H1 (cell line): ENCODE measurements at regions of chr10 and their contacts with region 1.

Region 1: DNA sequence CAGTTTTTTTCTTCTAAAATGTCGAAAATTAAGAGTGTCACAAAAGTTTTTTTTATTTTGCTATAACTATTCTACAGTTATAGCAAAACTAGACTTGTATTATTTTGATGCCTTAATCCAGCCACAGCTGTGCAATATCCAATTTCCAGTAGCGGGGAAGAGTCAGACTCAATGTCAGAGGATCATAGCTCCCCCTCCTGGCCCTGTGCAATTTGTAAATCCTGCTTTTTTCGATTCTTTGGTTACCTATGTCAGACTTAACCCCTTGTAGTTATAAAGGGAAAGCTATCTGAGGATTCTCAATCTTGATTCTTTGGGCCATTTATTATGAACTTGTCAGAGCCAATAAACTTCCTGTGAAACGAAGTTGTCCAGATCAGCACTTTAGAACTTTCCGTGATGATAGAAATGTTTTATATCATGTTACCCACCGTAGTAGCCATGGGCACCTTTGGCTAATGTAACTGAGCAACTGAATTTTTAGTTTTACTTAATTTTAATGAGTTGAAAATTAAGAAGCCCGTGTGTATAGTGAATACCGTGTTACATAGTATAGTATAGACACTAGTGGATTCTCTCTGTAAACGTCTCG is 87.7 kb upstream of the PRKCQ start:
- DNase-seq: peak in 1 of 2 experiments; percentile 59
- H3K4me3 ChIP-seq: no peak overlapping the region
- H3K27ac ChIP-seq: no peak overlapping the region
- H3K4me1 ChIP-seq: no peaks in the 10 kb centered on the region
- H3K27me3 ChIP-seq: no peaks in the 10 kb centered on the region
- CTCF ChIP-seq: peak in 2 of 3 experiments; percentile 66 to 76; a peak in 3 of 4 replicates
- EP300 ChIP-seq: no peak
- POLR2A ChIP-seq: no peak
- RAD21 ChIP-seq: peak; percentile 86 to 89

Region 2: DNA sequence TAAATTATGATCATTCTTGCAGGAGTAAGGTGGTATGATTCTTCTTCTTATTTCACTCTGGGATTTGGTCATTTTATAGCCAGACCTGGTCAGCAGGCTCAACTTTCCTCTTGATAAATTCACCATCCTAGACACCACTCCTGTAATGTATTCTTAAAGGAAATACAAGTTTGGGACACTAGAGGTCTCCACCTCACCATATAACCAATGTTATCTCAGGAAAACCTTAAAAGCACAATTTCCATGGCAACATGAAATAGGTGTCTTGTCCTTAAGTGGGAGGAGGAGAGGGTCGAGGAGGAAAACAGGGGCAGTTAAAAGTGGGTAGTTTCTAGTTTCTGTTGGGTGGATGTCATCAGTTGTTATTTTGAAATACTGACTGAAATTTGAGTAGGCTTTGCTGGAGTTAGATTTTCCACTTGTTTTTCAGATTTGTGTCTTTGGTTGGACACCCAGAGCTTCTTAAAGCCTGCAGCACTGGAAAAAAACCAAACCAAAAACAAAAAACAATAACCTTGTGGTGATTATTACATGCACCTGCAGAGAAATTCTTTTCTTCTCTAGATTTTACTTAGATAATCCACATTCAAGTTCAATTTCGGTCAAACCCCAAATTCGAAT is 250.8 kb before region 1 on chr10:
- CTCF ChIA-PET with region 1: interaction called, 11 read pairs
- POLR2A ChIA-PET with region 1: no interaction called
- DNase-seq: no peak
- H3K4me3 ChIP-seq: no peak overlapping the region
- H3K27ac ChIP-seq: no peak overlapping the region
- H3K4me1 ChIP-seq: no peaks in the 10 kb centered on the region; a peak in 1 of 7 replicates
- H3K27me3 ChIP-seq: no peaks in the 10 kb centered on the region
- CTCF ChIP-seq: peak in 2 of 3 experiments; percentile 65 to 69; a peak in 2 of 4 replicates
- EP300 ChIP-seq: no peak
- POLR2A ChIP-seq: no peak
- RAD21 ChIP-seq: peak; percentile 87 to 88

Region 3: DNA sequence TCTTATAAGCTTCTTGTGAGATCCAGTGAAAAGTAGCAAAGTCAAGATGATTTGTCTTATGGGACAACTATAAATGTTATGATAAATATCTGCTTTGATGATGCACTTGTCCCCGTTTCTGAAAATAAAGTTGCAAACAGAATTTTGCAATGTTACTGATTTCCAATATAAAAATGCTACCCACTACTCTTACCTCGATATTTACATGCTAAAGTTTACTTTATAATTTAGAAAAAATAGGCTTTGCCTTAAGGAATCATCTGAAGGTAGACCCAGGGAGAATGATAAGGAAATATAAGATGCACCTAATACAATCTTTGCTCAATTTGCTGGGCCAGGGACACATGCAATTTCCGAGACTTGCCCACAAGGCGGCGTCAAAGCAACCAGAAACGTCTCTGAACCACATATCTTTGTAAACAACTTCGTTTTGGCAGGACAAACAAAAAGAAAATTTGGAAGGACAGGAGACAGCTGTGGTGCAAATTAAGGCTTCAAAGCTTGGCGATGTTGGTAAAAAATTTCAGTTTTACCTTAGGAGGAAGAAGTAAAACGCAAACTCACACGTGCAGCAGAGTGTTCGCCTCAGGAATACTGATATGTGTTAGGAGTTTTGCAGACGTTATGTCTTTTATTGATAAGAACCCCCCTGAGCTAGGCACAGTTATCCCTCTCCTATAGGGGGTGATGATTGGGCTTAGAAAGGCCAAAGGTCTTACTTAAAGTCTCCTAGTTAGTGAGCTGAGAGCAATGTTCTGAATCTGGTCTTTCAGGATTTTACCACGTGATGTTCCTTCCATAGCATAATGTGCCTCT is 222.1 kb before region 1 on chr10:
- CTCF ChIA-PET with region 1: interaction called, 31 read pairs
- POLR2A ChIA-PET with region 1: no interaction called
- DNase-seq: no peak
- H3K4me3 ChIP-seq: no peak overlapping the region
- H3K27ac ChIP-seq: no peak overlapping the region
- H3K4me1 ChIP-seq: no peaks in the 10 kb centered on the region
- H3K27me3 ChIP-seq: no peaks in the 10 kb centered on the region
- CTCF ChIP-seq: peak; percentile 58 to 67 (median 66)
- EP300 ChIP-seq: no peak
- POLR2A ChIP-seq: no peak
- RAD21 ChIP-seq: peak; percentile 60 to 65

Region 4: DNA sequence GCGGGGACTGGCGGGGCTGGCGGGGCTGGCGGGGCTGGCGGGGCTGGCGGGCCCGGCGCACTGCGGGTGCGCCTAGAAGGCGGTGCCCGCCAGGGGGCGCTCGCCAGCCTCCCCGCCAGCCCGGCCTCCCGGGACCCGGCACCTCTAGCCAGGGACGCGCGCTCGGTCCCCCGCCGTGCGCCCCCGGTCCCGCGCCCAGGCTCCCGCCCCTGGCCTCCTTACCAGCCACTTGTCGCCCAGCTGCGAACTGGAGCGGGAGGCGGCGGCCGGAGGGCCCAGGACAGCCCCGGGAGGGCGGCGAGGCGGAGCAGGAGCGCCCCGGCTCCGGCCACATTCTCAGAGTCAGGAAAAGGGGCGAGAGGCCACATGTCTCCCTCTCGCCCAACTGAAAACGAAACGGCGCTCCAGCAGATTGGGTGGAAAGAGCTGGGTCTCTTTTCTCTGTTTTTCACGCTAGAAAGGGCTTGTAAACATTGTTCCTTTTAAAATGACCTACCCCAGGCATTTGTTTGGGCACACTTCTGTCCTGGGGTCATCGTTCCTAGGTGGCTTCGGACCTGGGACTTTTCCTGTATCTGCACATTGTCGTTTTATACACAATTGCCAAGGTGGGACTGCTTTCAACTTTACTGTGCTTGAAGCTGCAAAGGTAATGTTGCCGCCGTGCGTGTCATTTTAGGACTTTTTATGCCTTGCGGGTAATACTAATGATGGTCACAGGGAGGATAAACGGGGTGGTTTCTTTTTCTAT is 87.3 kb before region 1 on chr10:
- CTCF ChIA-PET with region 1: interaction called, 23 read pairs
- POLR2A ChIA-PET with region 1: no interaction called
- DNase-seq: peak; percentile 44 to 92
- H3K4me3 ChIP-seq: peak overlapping the region; percentile 54 to 76 (median 72)
- H3K27ac ChIP-seq: peak overlapping the region; percentile 60; the same call in 1 of the 2 replicates
- H3K4me1 ChIP-seq: peaks cover 2 to 9% (median 8%) of the 10 kb centered on the region in 4 experiments; a peak in 6 of 7 replicates
- H3K27me3 ChIP-seq: peaks cover 0 to 5% (median 2%) of the 10 kb centered on the region in 4 experiments; a peak in 4 of 7 replicates
- CTCF ChIP-seq: peak; percentile 34 to 63 (median 58)
- EP300 ChIP-seq: 0 out of 3 replicates have a peak, but pooled peaks of 1 of the 2 experiments have one; percentile 21
- POLR2A ChIP-seq: peak; percentile 60 to 65; a peak in 2 of 3 replicates
- RAD21 ChIP-seq: peak; percentile 28 to 56

Region 5: DNA sequence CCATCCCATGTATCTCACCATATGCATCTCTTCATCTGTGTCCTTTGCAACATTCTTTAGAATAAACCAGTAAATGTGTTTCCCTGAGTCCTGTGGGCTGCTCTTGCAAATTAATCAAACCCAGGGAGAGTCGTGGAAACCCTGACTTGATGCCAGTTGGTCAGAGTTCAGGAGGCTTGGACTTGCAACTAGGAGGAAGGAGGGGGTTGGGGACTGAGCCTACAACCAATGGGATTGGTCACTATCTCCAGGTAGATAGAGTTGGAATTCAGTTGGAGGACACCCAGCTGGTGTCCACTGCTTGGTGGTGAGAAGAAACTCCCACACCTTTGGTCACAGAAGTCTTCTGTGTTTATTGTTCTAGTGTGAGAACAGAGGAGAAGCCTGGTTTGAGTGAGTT is 49.4 kb before region 1 on chr10:
- CTCF ChIA-PET with region 1: no interaction called
- POLR2A ChIA-PET with region 1: no interaction called
- DNase-seq: no peak
- H3K4me3 ChIP-seq: no peak overlapping the region
- H3K27ac ChIP-seq: no peak overlapping the region
- H3K4me1 ChIP-seq: peaks cover 0 to 8% (median 1%) of the 10 kb centered on the region in 4 experiments; a peak in 2 of 7 replicates
- H3K27me3 ChIP-seq: no peaks in the 10 kb centered on the region
- CTCF ChIP-seq: no peak
- EP300 ChIP-seq: no peak
- POLR2A ChIP-seq: no peak
- RAD21 ChIP-seq: no peak

Region 6: GRCh38 chr10:6647811-6648526 is 19.8 kb before region 1 on chr10:
- CTCF ChIA-PET with region 1: interaction called, 26 read pairs
- POLR2A ChIA-PET with region 1: interaction called, 3 read pairs
- DNase-seq: peak; percentile 58 to 86
- H3K4me3 ChIP-seq: no peak overlapping the region; a peak in 1 of 8 replicates
- H3K27ac ChIP-seq: no peak overlapping the region
- H3K4me1 ChIP-seq: peaks cover 0 to 12% (median 3%) of the 10 kb centered on the region in 4 experiments; a peak in 4 of 7 replicates
- H3K27me3 ChIP-seq: no peaks in the 10 kb centered on the region
- CTCF ChIP-seq: peak; percentile 73 to 79 (median 75)
- EP300 ChIP-seq: no peak
- POLR2A ChIP-seq: no peak
- RAD21 ChIP-seq: peak; percentile 74 to 83

Region 7: DNA sequence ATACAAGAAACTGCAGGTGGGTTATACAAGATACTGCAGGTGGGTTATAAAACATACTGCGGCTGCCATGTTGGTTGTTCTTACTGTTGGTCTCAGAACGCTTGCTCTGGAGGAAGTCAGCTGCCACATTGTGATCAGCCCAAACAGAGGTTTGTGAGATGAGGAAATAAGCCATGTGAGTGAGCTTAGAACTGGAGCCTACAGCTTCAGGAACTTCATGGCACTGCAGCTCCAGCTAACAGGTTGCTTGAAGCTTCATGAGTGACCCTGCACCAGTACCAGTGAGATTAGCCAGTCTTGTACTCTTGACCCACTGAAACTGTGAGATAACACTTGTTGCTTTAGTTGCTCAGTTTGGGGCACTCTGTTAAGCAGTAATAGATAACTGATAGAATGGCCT is 13.2 kb before region 1 on chr10:
- CTCF ChIA-PET with region 1: interaction called, 26 read pairs
- POLR2A ChIA-PET with region 1: no interaction called
- DNase-seq: no peak
- H3K4me3 ChIP-seq: no peak overlapping the region
- H3K27ac ChIP-seq: no peak overlapping the region
- H3K4me1 ChIP-seq: peaks cover 0 to 6% (median 2%) of the 10 kb centered on the region in 4 experiments; a peak in 2 of 7 replicates
- H3K27me3 ChIP-seq: no peaks in the 10 kb centered on the region
- CTCF ChIP-seq: no peak
- EP300 ChIP-seq: no peak
- POLR2A ChIP-seq: no peak
- RAD21 ChIP-seq: no peak

Region 8: GRCh38 chr10:6678211-6678803 is 10.5 kb after region 1 on chr10:
- CTCF ChIA-PET with region 1: interaction called, 15 read pairs
- POLR2A ChIA-PET with region 1: no interaction called
- DNase-seq: peak in 1 of 2 experiments; percentile 80
- H3K4me3 ChIP-seq: no peak overlapping the region
- H3K27ac ChIP-seq: no peak overlapping the region
- H3K4me1 ChIP-seq: no peaks in the 10 kb centered on the region; a peak in 1 of 7 replicates
- H3K27me3 ChIP-seq: no peaks in the 10 kb centered on the region
- CTCF ChIP-seq: peak; percentile 69 to 91 (median 84)
- EP300 ChIP-seq: no peak
- POLR2A ChIP-seq: no peak
- RAD21 ChIP-seq: peak; percentile 87 to 91

Region 9: GRCh38 chr10:6721480-6721879 is 53.7 kb after region 1 on chr10:
- CTCF ChIA-PET with region 1: no interaction called
- POLR2A ChIA-PET with region 1: no interaction called
- DNase-seq: no peak
- H3K4me3 ChIP-seq: no peak overlapping the region
- H3K27ac ChIP-seq: no peak overlapping the region
- H3K4me1 ChIP-seq: peaks cover 0 to 19% (median 3%) of the 10 kb centered on the region in 4 experiments; a peak in 6 of 7 replicates
- H3K27me3 ChIP-seq: no peaks in the 10 kb centered on the region
- CTCF ChIP-seq: peak in 1 of 3 experiments; percentile 3; a peak in 1 of 4 replicates
- EP300 ChIP-seq: no peak
- POLR2A ChIP-seq: no peak
- RAD21 ChIP-seq: peak; percentile 30 to 34; a peak in 2 of 4 replicates